ENCODE measurements at regions of chr1 and their contacts with region 1.

Region 1: GRCh38 chr1:16073490-16074119 is at the start of gene FAM131C:
- DNase-seq: peak; percentile 49
- H3K4me3 Mint-ChIP-seq: peak within 1 kb of the TSS; percentile 65
- H3K27ac Mint-ChIP-seq: no peak within 1 kb of the TSS
- H3K4me1 Mint-ChIP-seq: peaks cover 13% of the 10 kb centered on the region
- H3K27me3 Mint-ChIP-seq: peaks cover 9% of the 10 kb centered on the region
- total RNA-seq, gene FAM131C: 0.33 TPM in 1 of 2 experiments, not detected in the other

Region 2: DNA sequence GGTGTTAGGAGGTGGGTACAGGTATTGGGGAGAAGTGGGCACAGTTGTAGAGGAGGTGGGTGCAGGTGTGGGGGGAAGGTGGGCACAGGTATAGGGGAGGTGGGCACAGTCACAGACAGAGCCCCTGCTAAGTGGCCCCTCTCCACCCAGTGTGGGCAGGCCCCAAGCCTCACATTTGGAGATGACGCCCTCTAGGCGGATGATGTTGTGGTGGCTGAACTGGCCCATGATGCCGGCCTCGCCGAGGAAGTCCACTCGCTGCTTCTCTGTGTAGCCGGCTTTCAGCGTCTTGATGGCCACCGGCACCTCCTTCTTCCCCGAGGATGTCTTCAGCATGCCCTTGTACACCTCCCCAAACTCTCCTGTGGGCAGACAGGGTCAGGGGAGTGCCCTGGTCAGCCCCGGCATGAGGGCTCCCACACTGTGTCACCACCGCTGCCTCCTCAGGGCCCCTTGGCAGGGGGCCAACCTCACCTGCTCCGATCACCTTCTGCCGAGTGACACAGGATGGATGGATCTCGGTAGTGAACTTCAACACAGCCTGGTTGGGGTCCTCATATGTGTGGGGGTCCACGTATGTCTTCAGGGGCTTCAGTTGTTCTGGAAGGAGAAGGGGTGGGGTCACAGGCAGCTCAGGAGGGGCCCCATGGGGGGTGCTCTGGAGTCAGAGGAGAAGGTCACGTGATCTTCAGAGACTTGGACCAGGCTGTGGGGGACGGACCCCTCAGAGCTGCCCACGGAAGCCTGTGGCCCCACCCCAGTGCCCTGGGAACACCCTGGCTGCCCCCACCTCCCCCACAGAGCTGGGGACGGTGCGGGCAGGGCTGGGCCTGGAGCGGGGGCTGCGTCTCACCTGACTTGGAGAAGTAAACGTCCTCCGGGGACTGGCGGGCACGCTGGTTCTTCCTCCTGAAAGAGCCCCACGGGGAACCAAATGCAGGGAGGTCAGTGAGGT is 59.7 kb after region 1 on chr1:
- CTCF ChIA-PET with region 1: no interaction called
- POLR2A ChIA-PET with region 1: no interaction called
- intact Hi-C with region 1: no loop called
- DNase-seq: no peak
- H3K4me3 Mint-ChIP-seq: no peak overlapping the region
- H3K27ac Mint-ChIP-seq: no peak overlapping the region
- H3K4me1 Mint-ChIP-seq: no peaks in the 10 kb centered on the region
- H3K27me3 Mint-ChIP-seq: no peaks in the 10 kb centered on the region

Region 3: GRCh38 chr1:16187748-16188401 is 114.3 kb after region 1 on chr1:
- CTCF ChIA-PET with region 1: interaction called, 381 read pairs
- POLR2A ChIA-PET with region 1: interaction called, 3 read pairs
- intact Hi-C with region 1: loop called (anchors 2 kb)
- DNase-seq: peak; percentile 83
- H3K4me3 Mint-ChIP-seq: no peak overlapping the region
- H3K27ac Mint-ChIP-seq: no peak overlapping the region
- H3K4me1 Mint-ChIP-seq: no peaks in the 10 kb centered on the region
- H3K27me3 Mint-ChIP-seq: peaks cover 5% of the 10 kb centered on the region

Region 4: GRCh38 chr1:16243936-16244649 is 170.5 kb after region 1 on chr1:
- CTCF ChIA-PET with region 1: interaction called, 66 read pairs
- POLR2A ChIA-PET with region 1: no interaction called
- intact Hi-C with region 1: no loop called
- DNase-seq: peak; percentile 86
- H3K4me3 Mint-ChIP-seq: no peak overlapping the region
- H3K27ac Mint-ChIP-seq: no peak overlapping the region
- H3K4me1 Mint-ChIP-seq: peaks cover 8% of the 10 kb centered on the region
- H3K27me3 Mint-ChIP-seq: no peaks in the 10 kb centered on the region